ENCODE measurements at regions of chr13 and their contacts with region 1.

Region 1: DNA sequence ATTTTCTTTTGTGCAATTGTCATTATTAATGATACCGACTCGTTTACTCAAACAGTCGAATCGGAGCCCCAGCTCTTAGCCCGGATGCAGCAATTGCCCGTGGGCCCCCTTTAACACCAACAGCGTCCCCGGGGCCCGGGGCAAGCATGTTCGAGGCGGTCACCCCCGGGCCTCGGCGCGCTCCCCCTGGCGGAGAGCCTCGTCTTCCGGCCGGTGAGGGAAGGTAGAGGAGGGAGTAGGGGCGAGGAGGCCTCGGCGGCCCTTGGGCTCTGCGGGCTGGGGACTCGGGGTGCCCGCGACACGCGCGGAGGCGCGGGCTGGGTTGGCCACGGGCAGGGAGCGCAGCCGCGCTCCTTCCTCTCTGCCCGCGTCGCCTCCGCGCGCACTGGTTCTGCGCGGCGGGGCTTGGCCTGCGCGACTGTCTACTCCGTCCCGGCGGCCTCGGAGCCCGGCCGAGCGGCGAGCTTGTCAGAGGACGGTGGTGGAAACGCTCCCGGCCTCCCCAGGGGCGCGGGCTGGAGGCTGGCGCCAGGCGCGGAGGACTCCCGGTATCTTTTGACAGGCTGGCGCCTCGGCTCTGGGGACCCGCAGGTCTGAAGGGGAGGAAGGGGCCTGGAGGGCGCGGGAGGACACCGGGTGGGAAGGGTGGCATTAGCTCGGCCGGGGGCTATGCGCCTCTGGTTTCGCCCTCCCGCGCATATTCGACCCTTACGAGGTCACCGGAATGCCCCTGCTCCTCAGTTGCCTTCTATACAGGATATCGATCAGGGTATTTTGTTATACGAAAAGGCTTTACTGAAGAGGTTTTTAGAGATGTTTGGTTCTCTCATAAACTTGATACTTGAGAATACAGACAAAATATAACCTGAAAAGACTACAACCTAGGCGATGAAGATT is 1.5 kb downstream of the BIVM start:
- DNase-seq: peak; percentile 90
- ATAC-seq: peak; percentile 81
- H3K4me3 Mint-ChIP-seq: peak overlapping the region; percentile 92
- H3K27ac Mint-ChIP-seq: peak overlapping the region; percentile 81
- H3K4me1 Mint-ChIP-seq: peaks cover 23% of the 10 kb centered on the region
- H3K27me3 Mint-ChIP-seq: peaks cover 8% of the 10 kb centered on the region
- CTCF ChIP-seq: peak; percentile 83

Region 2: DNA sequence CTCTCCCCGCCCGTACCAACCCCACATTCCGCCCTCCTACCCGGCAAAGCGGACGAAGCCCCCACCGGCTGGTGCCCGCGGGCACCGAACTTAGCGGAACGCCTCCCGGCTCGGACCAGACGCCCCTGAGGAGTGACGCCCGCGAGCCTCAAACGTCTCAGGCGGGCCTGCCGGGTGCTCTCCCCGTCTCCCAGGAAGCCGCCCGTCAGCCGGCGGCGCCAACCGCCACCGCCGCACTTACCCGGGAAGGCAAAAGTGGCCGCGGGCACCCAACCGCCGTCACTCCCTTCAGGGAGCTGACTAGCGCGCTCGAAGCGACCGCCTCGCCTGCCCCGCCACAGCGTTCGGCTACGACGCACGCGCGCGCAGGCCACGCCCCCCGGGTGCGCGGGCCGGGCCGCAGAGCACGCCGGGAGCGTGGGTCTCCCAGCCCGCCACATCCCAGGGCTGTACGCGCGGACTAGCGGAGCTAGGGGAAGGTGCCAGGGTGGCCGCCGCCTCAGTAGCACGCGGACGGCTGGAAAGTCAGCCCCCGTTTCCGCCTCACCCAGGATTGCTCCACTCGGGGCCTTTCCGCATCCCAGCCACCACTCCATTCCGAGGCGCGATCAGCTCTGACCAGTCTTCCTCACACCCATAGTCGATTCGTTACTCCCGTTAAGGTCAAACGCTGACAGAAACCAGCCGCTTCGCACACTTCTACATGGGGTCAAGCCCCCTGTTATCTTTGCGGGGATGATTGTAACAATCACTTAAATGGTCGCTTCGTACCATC is 26.8 kb before region 1 on chr13 and contains the start of gene TEX30:
- CTCF ChIA-PET with region 1: interaction called, 11 read pairs
- POLR2A ChIA-PET with region 1: interaction called, 9 read pairs
- intact Hi-C with region 1: loop called (anchors 2 kb)
- DNase-seq: peak; percentile 84
- ATAC-seq: peak; percentile 97
- H3K4me3 Mint-ChIP-seq: peak within 1 kb of the TSS; percentile 88
- H3K27ac Mint-ChIP-seq: peak within 1 kb of the TSS; percentile 95
- H3K4me1 Mint-ChIP-seq: peaks cover 47% of the 10 kb centered on the region
- H3K27me3 Mint-ChIP-seq: no peaks in the 10 kb centered on the region
- CTCF ChIP-seq: no peak
- total RNA-seq, gene TEX30: 30.5 to 32.8 TPM

Region 3: GRCh38 chr13:102779436-102780159 is 20.8 kb before region 1 on chr13:
- CTCF ChIA-PET with region 1: interaction called, 11 read pairs
- POLR2A ChIA-PET with region 1: interaction called, 7 read pairs
- intact Hi-C with region 1: loop called (anchors 2 kb)
- DNase-seq: peak; percentile 65
- ATAC-seq: peak; percentile 90
- H3K4me3 Mint-ChIP-seq: peak overlapping the region; percentile 45
- H3K27ac Mint-ChIP-seq: peak overlapping the region; percentile 96
- H3K4me1 Mint-ChIP-seq: peaks cover 34% of the 10 kb centered on the region
- H3K27me3 Mint-ChIP-seq: no peaks in the 10 kb centered on the region
- CTCF ChIP-seq: no peak

Region 4: DNA sequence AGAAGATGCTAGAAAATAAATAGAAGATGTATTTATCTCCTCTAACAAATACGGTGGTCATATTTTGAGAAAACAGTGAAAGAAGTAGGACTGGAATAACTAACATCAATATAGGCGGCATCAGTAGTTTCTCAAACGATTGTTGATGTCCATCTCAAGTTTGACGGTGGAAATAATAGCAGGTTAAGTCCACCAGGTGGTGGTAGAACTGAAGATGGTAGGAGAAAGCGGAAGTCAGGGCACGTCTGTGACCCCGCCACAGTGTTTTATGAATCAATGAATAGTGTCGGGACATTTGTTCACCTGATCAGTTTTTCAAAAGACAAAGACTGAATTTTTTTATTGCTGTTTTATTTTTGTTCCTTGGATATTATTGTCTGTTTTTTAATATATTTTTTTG is 972.2 kb after region 1 on chr13:
- CTCF ChIA-PET with region 1: no interaction called
- POLR2A ChIA-PET with region 1: no interaction called
- intact Hi-C with region 1: no loop called
- DNase-seq: no peak
- ATAC-seq: no peak
- H3K4me3 Mint-ChIP-seq: no peak overlapping the region
- H3K27ac Mint-ChIP-seq: no peak overlapping the region
- H3K4me1 Mint-ChIP-seq: no peaks in the 10 kb centered on the region
- H3K27me3 Mint-ChIP-seq: no peaks in the 10 kb centered on the region
- CTCF ChIP-seq: no peak

Measured in activated CD8-positive, alpha-beta T cell treated with anti-CD3 and anti-CD28 coated beads for 36 hours (primary cell).